HepG2 (cell line): ENCODE measurements at regions of chr9 and their contacts with region 1.

Region 1: DNA sequence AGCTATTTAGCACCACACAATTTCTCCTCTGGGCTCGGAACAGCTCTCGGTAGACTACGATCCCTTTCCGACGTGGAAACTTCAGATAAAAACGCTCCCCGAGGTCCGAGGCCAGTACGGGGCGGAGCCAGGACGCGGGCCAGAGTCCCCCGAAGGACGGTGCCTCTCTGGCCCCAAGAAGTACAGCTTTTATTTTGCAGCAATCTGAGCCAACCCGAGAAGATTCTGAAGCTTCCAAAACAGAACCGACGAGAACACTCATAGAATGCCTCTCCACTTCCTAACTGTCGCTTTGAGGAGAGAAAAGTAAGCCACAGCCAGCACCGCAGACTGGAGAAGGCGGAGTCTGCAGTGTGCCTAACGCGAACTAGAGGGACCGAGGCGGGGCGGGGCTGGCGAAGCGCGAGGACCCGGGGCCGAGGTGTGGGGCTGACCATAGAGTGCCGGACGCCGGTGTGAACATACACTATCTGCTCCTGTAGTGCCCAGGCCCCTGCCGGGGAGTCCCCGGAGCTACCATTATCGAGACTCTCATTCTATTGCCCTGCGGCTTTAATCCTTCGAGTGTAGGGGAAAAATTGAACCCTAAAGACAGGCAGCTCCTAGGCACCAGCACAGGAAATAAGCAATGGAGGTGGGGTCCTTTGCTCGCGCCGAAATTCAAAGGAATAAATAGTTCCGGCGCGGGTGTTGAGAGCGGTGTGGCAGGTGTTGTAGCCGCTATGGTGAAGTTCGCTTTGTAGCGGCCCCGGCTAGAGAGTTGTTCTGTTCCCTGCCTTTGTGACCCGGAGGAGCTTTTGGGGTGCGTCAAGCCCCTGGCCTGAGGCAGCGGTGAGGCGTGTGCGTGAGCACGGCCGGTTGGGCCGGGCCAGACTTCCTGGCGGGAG is at the start of gene SMC2:
- DNase-seq: peak; percentile 83
- ATAC-seq: peak; percentile 95
- H3K4me3 ChIP-seq: peak within 1 kb of the TSS; percentile 76 to 83 (median 83)
- H3K27ac ChIP-seq: peak within 1 kb of the TSS; percentile 94
- H3K4me1 ChIP-seq: peaks cover 31% of the 10 kb centered on the region
- H3K27me3 ChIP-seq: no peaks in the 10 kb centered on the region
- CTCF ChIP-seq: no peak
- EP300 ChIP-seq: no peak
- POLR2A ChIP-seq: peak; percentile 90 to 93
- RAD21 ChIP-seq: peak; percentile 36
- total RNA-seq, gene SMC2: 36.7 and 66.8 TPM in 2 replicates

Region 2: GRCh38 chr9:103397868-103398600 is 695.9 kb before region 1 on chr9:
- CTCF ChIA-PET with region 1: no interaction called
- POLR2A ChIA-PET with region 1: no interaction called
- in situ Hi-C with region 1: no loop called
- intact Hi-C with region 1: loop called (anchors 5 kb)
- DNase-seq: peak; percentile 51
- ATAC-seq: peak; percentile 96
- H3K4me3 ChIP-seq: no peak overlapping the region
- H3K27ac ChIP-seq: no peak overlapping the region
- H3K4me1 ChIP-seq: no peaks in the 10 kb centered on the region
- H3K27me3 ChIP-seq: no peaks in the 10 kb centered on the region
- CTCF ChIP-seq: peak; percentile 72
- EP300 ChIP-seq: no peak
- POLR2A ChIP-seq: no peak
- RAD21 ChIP-seq: no peak

Region 3: DNA sequence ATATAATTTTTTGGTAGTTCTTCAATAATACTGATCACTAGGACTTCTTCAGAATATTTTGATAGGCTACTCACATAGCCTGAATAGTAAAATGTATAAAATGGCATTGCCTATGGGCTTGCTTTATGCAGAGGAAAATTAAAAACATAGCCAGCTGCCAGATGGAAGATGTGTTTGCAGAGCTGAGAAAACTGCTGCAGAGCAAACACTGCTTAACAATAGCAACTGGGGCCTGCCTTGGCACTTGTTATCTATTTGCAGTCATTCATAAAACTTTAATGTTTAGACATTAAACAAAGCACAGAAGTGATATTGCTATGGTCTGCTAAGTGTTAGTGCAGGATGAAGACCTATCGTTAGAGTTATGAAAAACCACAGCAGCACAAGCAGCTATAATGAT is 151.2 kb before region 1 on chr9:
- CTCF ChIA-PET with region 1: no interaction called
- POLR2A ChIA-PET with region 1: no interaction called
- in situ Hi-C with region 1: no loop called
- intact Hi-C with region 1: loop called (anchors 10 kb)
- DNase-seq: no peak
- ATAC-seq: no peak
- H3K4me3 ChIP-seq: no peak overlapping the region
- H3K27ac ChIP-seq: no peak overlapping the region
- H3K4me1 ChIP-seq: no peaks in the 10 kb centered on the region
- H3K27me3 ChIP-seq: no peaks in the 10 kb centered on the region
- CTCF ChIP-seq: no peak
- EP300 ChIP-seq: no peak
- POLR2A ChIP-seq: no peak
- RAD21 ChIP-seq: no peak